ENCODE measurements at regions of chr2 and their contacts with region 1.

Region 1: DNA sequence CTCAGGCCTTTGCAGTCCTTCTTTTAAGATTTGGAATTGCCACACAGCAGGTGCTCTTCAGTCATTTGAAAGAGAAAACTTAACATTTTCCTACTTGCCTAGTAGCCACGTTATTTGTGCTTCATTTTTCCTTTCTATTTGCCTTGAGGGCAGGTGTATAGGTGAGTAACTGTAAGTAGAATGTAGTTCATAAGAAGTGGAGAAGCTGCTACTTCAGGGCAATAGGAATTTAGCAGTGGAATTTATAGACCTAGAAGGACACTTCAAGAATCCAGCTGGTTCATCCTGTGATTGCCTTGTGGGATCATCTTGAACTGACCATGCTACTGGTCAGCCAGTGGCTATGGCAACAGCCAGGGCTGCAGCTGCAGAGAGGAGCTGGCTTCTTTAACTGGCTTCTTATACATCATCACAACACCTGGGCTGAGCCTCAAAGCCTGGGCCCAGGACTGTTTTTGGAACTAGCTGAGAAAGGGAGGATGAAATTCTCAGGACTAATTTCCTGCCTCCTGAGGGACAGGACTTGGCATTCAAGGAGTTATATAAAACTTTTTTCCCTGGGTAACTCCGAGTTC is 5.1 kb upstream of the LANCL1 start:
- DNase-seq: no peak
- ATAC-seq: no peak
- H3K4me3 ChIP-seq: no peak overlapping the region
- H3K4me3 Mint-ChIP-seq: no peak overlapping the region
- H3K27ac ChIP-seq: no peak overlapping the region
- H3K27ac Mint-ChIP-seq: peak overlapping the region in 2 of 9 donors; percentile 6 to 16
- H3K4me1 ChIP-seq: peaks cover 16 to 20% of the 10 kb centered on the region in 2 donors
- H3K4me1 Mint-ChIP-seq: peaks cover 19 to 46% (median 38%) of the 10 kb centered on the region in 7 donors
- H3K27me3 ChIP-seq: no peaks in the 10 kb centered on the region
- H3K27me3 Mint-ChIP-seq: no peaks in the 10 kb centered on the region

Region 2: GRCh38 chr2:210503001-210503623 is 21.4 kb after region 1 on chr2:
- CTCF ChIA-PET with region 1: no interaction called
- POLR2A ChIA-PET with region 1: no interaction called
- intact Hi-C with region 1: loop called in 1 of 2 experiments (anchors 1 kb)
- DNase-seq: peak in 5 of 9 donors; percentile 9 to 23 (median 12)
- ATAC-seq: peak; percentile 29
- H3K4me3 ChIP-seq: no peak overlapping the region
- H3K4me3 Mint-ChIP-seq: peak overlapping the region in 8 of 10 donors; percentile 39 to 76 (median 60)
- H3K27ac ChIP-seq: no peak overlapping the region
- H3K27ac Mint-ChIP-seq: no peak overlapping the region
- H3K4me1 ChIP-seq: no peaks in the 10 kb centered on the region
- H3K4me1 Mint-ChIP-seq: peaks cover 0 to 10% (median 5%) of the 10 kb centered on the region in 7 donors
- H3K27me3 ChIP-seq: no peaks in the 10 kb centered on the region
- H3K27me3 Mint-ChIP-seq: peaks cover 9 to 41% (median 23%) of the 10 kb centered on the region in 5 donors